Activated T-helper 1 cell treated with anti-CD3 and anti-CD28 coated beads, Interleukin-12 subunit alpha, Interleukin-12 subunit beta, Interleukin-2, Interleukin-4 antibody, amounts not matched to agents 30 ng/mL and 10 ng/mL and 1 ng/mL, durations not matched to agents 14 hours and 24 hours and 36 hours (primary cell): ENCODE measurements at regions of chr9 and their contacts with region 1.

Region 1: GRCh38 chr9:128902351-128903078 is 18.3 kb upstream of the PHYHD1 start:
- DNase-seq: peak; percentile 83
- H3K4me3 Mint-ChIP-seq: peak overlapping the region; percentile 66
- H3K27ac Mint-ChIP-seq: peak overlapping the region; percentile 96
- H3K4me1 Mint-ChIP-seq: peaks cover 65% of the 10 kb centered on the region
- H3K27me3 Mint-ChIP-seq: no peaks in the 10 kb centered on the region

Region 2: GRCh38 chr9:128587453-128587852 is 315.1 kb before region 1 on chr9:
- intact Hi-C with region 1: no loop called
- DNase-seq: peak; percentile 58
- H3K4me3 Mint-ChIP-seq: peak overlapping the region; percentile 16
- H3K27ac Mint-ChIP-seq: peak overlapping the region; percentile 70
- H3K4me1 Mint-ChIP-seq: peaks cover 11% of the 10 kb centered on the region
- H3K27me3 Mint-ChIP-seq: no peaks in the 10 kb centered on the region

Region 3: GRCh38 chr9:128863647-128864046 is 38.9 kb before region 1 on chr9:
- intact Hi-C with region 1: loop called (anchors 1 kb)
- DNase-seq: peak; percentile 77
- H3K4me3 Mint-ChIP-seq: no peak overlapping the region
- H3K27ac Mint-ChIP-seq: no peak overlapping the region
- H3K4me1 Mint-ChIP-seq: peaks cover 6% of the 10 kb centered on the region
- H3K27me3 Mint-ChIP-seq: no peaks in the 10 kb centered on the region

Region 4: DNA sequence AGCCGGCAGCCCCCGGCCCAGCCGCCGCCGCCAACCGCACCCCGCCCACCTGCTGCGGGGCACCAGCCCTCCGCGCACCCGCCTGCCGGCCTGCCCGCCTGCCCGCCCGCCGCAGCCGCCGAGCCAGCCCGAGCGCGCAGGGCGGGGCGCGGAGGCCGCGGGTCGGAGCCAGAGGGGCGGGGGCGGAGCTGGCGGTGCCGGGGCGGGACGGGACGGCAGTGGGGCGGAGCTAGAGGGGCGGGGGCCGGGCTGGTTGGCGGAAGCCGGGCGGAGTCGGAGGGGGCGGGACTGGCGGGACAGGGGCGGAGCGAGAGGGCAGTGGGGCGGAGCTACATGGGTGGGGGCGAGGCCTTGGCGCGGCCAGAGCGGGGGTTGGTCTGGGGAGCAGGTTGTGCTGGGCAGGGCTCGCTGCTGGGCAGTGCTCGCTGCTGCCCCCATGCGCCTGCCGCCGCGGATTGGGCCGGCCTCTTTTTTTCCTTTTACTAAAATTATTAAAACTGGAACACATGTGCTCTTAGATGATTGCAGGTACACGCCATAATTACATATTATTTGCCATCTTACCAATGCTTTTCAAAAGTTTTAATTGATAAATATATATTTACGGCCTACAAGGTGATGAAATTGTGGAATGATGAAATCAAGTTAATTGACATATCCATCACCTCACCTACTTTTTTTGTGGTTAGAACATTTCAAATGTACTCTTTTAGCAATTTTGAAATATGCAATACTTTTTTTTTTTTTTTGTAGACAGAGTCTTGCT is 125.9 kb after region 1 on chr9 and contains the start of gene SH3GLB2:
- intact Hi-C with region 1: loop called (anchors 1 kb)
- DNase-seq: peak; percentile 85
- H3K4me3 Mint-ChIP-seq: peak within 1 kb of the TSS; percentile 91
- H3K27ac Mint-ChIP-seq: peak within 1 kb of the TSS; percentile 80
- H3K4me1 Mint-ChIP-seq: peaks cover 24% of the 10 kb centered on the region
- H3K27me3 Mint-ChIP-seq: no peaks in the 10 kb centered on the region
- total RNA-seq, gene SH3GLB2: 71.1 and 74.8 TPM in 2 replicates